ENCODE measurements at regions of chr12 and their contacts with region 1.

Region 1: DNA sequence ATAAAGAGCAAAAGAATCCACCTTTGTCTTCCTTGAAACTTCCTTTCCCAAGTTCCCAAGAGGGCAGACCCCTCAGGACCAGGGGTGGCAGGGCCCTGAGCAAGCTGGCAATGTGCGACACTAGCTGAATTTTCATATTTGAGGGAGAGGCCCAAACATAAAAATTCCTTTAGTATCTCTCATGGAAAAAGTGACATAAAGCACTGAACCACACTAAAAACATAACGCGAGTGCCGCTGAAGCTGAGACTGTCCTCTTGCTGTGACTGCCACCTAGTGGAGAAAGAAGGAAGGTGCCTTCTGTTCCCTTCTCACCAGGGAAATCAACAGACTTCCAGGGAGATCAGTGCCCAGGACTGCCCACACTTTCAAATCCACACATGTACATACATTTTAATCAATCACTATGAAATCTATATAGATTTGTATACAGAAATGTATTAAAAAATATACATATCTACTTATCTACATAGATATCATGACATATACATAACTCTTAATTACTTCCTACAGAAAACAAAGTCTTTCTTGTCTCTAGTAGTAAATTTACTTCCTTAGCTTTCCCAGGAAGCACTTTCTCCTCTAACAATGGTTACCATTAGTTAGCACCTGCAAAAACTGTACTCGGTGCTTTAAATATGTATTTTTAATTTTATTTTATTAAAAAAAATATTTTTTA is 53.8 kb downstream of the SSH1 start:
- DNase-seq: peak; percentile 84
- H3K4me3 ChIP-seq: no peak overlapping the region
- H3K27ac ChIP-seq: peak overlapping the region; percentile 67 to 71
- H3K4me1 ChIP-seq: no peaks in the 10 kb centered on the region
- H3K27me3 ChIP-seq: no peaks in the 10 kb centered on the region
- CTCF ChIP-seq: peak; percentile 85 to 96 (median 95)
- POLR2A ChIP-seq: no peak

Region 2: GRCh38 chr12:108856428-108857157 is 53.0 kb after region 1 on chr12:
- intact Hi-C with region 1: loop called (anchors 5 kb)
- DNase-seq: peak; percentile 59
- H3K4me3 ChIP-seq: peak overlapping the region; percentile 58 to 61
- H3K27ac ChIP-seq: peak overlapping the region; percentile 68 to 82
- H3K4me1 ChIP-seq: peaks cover 10% of the 10 kb centered on the region
- H3K27me3 ChIP-seq: no peaks in the 10 kb centered on the region
- CTCF ChIP-seq: no peak
- POLR2A ChIP-seq: peak; percentile 40

Region 3: DNA sequence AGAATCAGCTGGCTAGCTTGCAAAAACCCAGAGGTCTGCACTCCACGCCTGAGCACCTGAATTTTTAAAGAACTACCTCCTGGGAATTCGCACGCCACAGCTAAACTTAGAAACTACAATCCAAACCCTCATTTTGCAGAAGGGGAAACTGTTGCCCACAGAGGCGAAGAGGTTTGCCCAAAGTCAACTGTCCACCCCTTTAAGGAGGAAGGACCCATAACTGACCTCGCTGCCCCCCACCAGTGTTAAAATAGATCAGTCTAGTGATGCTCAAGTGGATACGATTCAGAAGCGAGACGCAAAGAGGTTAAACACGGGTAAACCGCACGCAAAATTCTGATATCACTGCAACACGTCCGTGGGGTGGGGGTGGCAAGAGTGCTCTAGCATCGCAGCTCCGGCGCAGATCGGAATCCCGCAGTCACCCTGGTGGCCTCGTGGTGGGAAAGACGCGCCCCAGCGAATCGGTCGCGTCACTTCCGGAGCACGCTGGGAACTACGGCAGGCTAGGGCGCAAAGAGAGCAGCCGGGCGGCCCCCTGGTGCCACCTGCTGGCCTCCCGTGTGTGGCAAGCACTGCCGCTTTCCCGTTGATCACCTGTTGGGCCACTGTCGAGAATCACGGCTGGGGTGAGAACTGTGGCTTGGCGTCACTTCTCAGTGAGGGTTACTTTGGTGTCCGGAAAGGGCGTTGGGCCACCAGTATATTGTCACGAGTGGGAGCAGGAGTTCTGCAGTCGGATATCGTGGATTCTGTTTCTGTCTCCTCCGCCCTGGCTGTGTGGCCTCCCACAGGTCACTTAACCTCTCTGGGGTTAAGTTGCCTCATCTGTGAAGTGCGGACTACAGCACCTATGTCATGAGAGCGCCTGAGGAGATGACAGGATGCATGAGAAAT is 289.7 kb after region 1 on chr12 and contains the start of gene ALKBH2:
- intact Hi-C with region 1: loop called (anchors 10 kb)
- DNase-seq: peak; percentile 89
- H3K4me3 ChIP-seq: peak within 1 kb of the TSS; percentile 43 to 46
- H3K27ac ChIP-seq: peak within 1 kb of the TSS in 1 of 2 donors; percentile 55
- H3K4me1 ChIP-seq: no peaks in the 10 kb centered on the region
- H3K27me3 ChIP-seq: no peaks in the 10 kb centered on the region
- CTCF ChIP-seq: peak; percentile 94 to 99 (median 98)
- POLR2A ChIP-seq: no peak
- total RNA-seq, gene ALKBH2: 16.6 to 26.2 TPM

Region 4: DNA sequence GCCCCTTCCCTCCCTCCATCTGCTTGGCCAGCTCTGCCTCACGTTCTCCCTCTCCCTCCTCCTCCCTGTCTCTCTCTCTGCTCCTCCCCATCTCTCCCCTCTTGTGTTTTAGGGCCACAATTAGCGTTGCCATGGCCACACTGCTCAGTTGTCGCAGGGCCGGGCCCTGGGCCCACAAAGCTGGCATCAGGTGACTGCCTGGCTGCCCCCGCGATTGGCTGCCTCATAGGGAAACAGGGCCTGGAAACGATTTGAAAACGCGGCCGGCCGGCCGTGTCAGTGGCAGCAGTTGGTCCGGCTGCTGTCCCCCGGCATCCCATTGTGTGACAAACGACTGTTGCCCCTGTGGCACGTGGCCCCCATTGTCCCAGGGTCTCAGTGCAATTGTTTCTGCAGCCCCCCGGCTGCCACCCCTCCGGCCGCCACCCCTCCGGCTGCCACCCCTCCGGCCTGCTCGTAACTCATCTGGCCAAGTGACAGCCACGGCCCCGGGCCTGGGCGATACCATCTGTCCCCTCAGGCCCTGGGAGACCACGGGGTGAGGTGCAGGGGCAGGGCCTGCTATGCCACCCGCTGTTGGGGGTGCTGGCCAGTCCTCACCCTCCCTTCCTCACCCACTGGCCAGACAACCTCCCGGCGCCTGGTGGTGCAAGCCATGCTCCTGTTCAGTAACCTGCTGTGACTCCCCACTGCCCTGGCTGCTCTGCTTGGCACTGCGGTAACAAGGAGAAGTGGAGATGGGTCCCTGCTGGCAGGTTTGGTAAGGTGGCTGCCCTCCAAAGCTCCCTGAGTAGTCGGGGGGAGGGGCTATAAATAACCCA is 488.2 kb after region 1 on chr12:
- intact Hi-C with region 1: no loop called
- DNase-seq: peak; percentile 26
- H3K4me3 ChIP-seq: peak overlapping the region in 1 of 2 donors; percentile 6
- H3K27ac ChIP-seq: peak overlapping the region in 1 of 2 donors; percentile 18
- H3K4me1 ChIP-seq: no peaks in the 10 kb centered on the region
- H3K27me3 ChIP-seq: no peaks in the 10 kb centered on the region
- CTCF ChIP-seq: no peak
- POLR2A ChIP-seq: no peak

Measured in prostate gland (tissue), 2 donors.